H1 (cell line): ENCODE measurements at regions of chr10 and their contacts with region 1.

Region 1: GRCh38 chr10:133100706-133101415 is 13.1 kb downstream of the ADGRA1 start:
- DNase-seq: peak; percentile 78 to 94
- H3K4me3 ChIP-seq: peak overlapping the region in 2 of 4 experiments; percentile 14 to 37; a peak in 2 of 8 replicates
- H3K27ac ChIP-seq: no peak overlapping the region
- H3K4me1 ChIP-seq: peaks cover 5 to 23% (median 17%) of the 10 kb centered on the region in 4 experiments
- H3K27me3 ChIP-seq: no peaks in the 10 kb centered on the region
- CTCF ChIP-seq: no peak
- EP300 ChIP-seq: no peak
- POLR2A ChIP-seq: no peak
- RAD21 ChIP-seq: no peak

Region 2: DNA sequence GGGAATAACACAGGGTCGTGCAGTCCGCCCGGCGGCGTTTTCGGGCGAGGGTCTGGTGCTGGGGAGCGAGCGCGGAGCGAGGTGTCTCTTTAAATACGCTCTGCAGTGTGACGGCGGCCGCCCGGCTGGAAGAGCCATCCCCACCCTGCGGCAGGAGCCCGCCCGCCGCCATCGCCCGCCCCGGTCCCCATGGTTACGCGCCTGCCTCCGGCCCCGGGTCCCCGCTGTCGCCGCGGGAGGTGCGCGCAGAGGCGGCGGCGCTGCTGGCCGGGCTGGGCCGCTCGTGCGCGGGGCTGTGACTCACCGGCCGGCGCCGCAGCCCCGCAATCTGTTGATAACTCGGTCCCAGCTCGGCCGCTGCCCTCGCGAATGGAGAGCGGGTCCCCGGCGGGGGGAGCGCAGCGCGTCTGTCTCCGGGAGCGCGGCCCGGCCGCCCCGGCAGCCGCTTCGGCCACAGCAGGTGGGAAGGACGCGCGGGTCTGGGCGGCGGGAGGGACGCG is 13.1 kb before region 1 on chr10 and contains the start of gene ADGRA1:
- CTCF ChIA-PET with region 1: interaction called, 13 read pairs
- POLR2A ChIA-PET with region 1: no interaction called
- DNase-seq: no peak
- H3K4me3 ChIP-seq: peak within 1 kb of the TSS; percentile 31 to 72 (median 36)
- H3K27ac ChIP-seq: no peak within 1 kb of the TSS
- H3K4me1 ChIP-seq: no peaks in the 10 kb centered on the region; a peak in 4 of 7 replicates
- H3K27me3 ChIP-seq: peaks cover 26 to 46% (median 43%) of the 10 kb centered on the region in 4 experiments
- CTCF ChIP-seq: no peak
- EP300 ChIP-seq: no peak
- POLR2A ChIP-seq: no peak
- RAD21 ChIP-seq: no peak
- total RNA-seq, gene ADGRA1: 0.08 and 0.17 TPM in 2 replicates

Region 3: DNA sequence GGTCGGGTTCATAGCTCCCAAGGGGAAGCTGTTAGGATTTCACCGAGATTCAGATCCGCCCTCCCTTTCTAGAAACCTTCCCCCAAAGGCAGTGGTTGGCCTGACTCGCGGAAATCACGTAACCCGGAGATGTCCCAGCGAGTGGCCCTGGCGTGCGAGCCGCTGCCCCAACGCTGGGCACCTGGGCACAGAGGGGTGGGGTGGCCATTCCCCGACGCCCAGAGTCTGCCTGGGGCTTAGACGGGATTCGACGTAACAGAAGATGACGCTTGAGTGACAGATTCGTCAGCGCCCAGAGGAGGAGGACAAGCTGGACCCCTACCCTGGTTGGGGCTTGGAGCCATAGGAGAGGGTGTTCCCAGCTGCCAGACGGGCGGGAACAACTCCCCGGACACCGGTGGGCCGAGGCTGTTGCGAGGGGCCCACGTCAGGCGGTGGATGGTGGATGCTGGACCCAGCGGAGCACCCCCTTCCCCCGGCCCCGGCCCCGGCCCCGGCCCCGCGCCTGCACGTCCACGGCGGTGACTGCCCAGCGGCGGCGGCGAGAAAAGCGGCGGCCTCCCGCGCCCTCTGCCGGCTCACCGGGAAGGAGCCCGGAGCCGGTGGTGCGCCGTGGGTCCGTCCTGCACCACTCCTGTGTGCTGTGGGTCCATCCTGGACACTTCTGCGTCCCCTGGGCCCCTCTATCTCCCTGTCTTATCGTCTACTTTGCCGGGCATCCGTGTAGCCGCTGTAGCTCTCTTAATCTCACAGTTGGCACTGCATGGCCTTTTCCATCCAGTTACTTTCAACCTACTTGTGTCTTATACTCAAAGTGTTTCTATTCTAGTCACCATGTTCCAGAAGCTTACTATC is 23.7 kb after region 1 on chr10:
- CTCF ChIA-PET with region 1: interaction called, 27 read pairs
- POLR2A ChIA-PET with region 1: interaction called, 3 read pairs
- DNase-seq: peak in 1 of 2 experiments; percentile 88
- H3K4me3 ChIP-seq: peak overlapping the region in 1 of 4 experiments; percentile 32; a peak in 2 of 8 replicates
- H3K27ac ChIP-seq: no peak overlapping the region
- H3K4me1 ChIP-seq: peaks cover 0 to 3% (median 0%) of the 10 kb centered on the region in 4 experiments; a peak in 1 of 7 replicates
- H3K27me3 ChIP-seq: no peaks in the 10 kb centered on the region; a peak in 1 of 7 replicates
- CTCF ChIP-seq: peak in 2 of 3 experiments; percentile 52 to 81; a peak in 3 of 4 replicates
- EP300 ChIP-seq: no peak
- POLR2A ChIP-seq: no peak
- RAD21 ChIP-seq: peak; percentile 76 to 82